ENCODE measurements at regions of chr6 and their contacts with region 1.

Region 1: GRCh38 chr6:9250852-9251251 is 815.5 kb upstream of the SLC35B3 start:
- DNase-seq: peak; percentile 55
- H3K4me3 Mint-ChIP-seq: no peak overlapping the region
- H3K27ac Mint-ChIP-seq: no peak overlapping the region
- H3K4me1 Mint-ChIP-seq: peaks cover 14% of the 10 kb centered on the region
- H3K27me3 Mint-ChIP-seq: no peaks in the 10 kb centered on the region
- CTCF ChIP-seq: peak; percentile 30

Region 2: DNA sequence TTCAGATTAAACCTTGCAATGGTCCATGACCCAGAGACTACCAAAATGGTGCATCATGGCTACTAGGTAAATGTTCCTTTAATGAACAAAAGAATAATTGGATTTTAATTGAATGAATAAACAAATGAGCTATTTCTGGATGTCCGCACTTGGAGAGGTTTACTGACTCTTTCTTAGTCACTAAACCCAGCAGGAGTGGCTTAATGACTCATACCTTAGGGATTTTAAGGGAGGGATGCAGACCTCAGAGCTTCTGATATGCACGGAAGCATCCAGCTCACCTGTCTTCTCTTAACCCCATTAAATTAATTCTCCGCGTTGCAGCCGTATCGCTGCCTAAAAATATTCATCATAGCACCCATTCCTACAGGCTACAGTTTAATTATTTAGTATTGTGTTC is 154.5 kb after region 1 on chr6:
- CTCF ChIA-PET with region 1: no interaction called
- intact Hi-C with region 1: loop called (anchors 2 kb)
- DNase-seq: peak; percentile 37
- H3K4me3 Mint-ChIP-seq: peak overlapping the region; percentile 48
- H3K27ac Mint-ChIP-seq: peak overlapping the region; percentile 89
- H3K4me1 Mint-ChIP-seq: peaks cover 36% of the 10 kb centered on the region
- H3K27me3 Mint-ChIP-seq: no peaks in the 10 kb centered on the region
- CTCF ChIP-seq: no peak

Region 3: GRCh38 chr6:9610620-9611415 is 360.0 kb after region 1 on chr6:
- CTCF ChIA-PET with region 1: no interaction called
- intact Hi-C with region 1: loop called (anchors 2 kb)
- DNase-seq: no peak
- H3K4me3 Mint-ChIP-seq: no peak overlapping the region
- H3K27ac Mint-ChIP-seq: no peak overlapping the region
- H3K4me1 Mint-ChIP-seq: no peaks in the 10 kb centered on the region
- H3K27me3 Mint-ChIP-seq: no peaks in the 10 kb centered on the region
- CTCF ChIP-seq: no peak

Region 4: DNA sequence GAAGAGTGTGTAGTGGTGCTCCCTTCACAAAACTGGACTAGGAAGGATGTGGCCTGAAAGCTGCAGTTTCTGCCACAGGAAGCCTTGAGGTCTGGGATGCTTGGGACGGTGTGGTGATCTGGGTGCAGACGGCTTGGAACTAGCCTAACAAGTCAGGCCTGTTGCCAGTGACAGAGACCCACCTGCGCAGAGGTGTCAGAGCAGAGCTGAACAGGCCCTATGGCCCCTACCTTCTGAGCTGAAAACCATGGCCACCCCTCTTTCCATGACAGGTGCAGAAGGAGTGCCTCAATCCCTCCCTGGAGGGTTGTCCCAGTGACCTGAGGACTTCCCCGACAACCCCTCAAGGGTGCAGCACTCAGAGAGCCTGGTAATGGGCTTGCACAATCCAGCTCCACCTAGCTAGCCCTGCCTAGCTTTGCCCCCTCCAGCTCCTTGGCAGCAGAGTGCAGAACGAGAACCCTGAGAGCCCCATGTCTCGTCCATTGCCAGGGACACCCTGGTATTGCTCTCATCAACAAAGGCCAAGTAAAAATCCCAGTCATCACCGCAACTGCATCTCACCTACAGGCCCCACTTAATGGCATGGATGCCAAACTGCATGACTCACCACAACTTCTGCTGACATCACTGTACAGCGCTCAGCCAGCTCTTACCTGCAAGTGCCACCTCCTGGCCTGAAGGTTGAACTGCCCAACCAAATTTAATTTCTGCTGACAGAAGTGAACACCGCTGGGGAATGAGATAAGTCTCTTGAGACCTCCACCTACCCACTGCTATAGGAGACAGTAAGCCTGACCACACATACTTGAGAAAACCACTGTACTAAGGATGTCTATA is 600.9 kb after region 1 on chr6:
- CTCF ChIA-PET with region 1: no interaction called
- intact Hi-C with region 1: loop called (anchors 2 kb)
- DNase-seq: peak; percentile 60
- H3K4me3 Mint-ChIP-seq: no peak overlapping the region
- H3K27ac Mint-ChIP-seq: no peak overlapping the region
- H3K4me1 Mint-ChIP-seq: no peaks in the 10 kb centered on the region
- H3K27me3 Mint-ChIP-seq: no peaks in the 10 kb centered on the region
- CTCF ChIP-seq: no peak

Measured in Calu3 (cell line).